ENCODE measurements at regions of chr15 and their contacts with region 1.

Region 1: GRCh38 chr15:80455668-80456442 is 51.7 kb downstream of the ARNT2 start:
- DNase-seq: peak; percentile 97
- ATAC-seq: peak; percentile 79
- H3K4me3 ChIP-seq: no peak overlapping the region
- H3K27ac ChIP-seq: peak overlapping the region; percentile 79; the same call in 1 of the 2 replicates
- H3K4me1 ChIP-seq: peaks cover 20% of the 10 kb centered on the region
- H3K27me3 ChIP-seq: no peaks in the 10 kb centered on the region
- CTCF ChIP-seq: peak; percentile 99
- POLR2A ChIP-seq: peak; percentile 46; the same call in 1 of the 2 replicates
- RAD21 ChIP-seq: peak; percentile 100

Region 2: DNA sequence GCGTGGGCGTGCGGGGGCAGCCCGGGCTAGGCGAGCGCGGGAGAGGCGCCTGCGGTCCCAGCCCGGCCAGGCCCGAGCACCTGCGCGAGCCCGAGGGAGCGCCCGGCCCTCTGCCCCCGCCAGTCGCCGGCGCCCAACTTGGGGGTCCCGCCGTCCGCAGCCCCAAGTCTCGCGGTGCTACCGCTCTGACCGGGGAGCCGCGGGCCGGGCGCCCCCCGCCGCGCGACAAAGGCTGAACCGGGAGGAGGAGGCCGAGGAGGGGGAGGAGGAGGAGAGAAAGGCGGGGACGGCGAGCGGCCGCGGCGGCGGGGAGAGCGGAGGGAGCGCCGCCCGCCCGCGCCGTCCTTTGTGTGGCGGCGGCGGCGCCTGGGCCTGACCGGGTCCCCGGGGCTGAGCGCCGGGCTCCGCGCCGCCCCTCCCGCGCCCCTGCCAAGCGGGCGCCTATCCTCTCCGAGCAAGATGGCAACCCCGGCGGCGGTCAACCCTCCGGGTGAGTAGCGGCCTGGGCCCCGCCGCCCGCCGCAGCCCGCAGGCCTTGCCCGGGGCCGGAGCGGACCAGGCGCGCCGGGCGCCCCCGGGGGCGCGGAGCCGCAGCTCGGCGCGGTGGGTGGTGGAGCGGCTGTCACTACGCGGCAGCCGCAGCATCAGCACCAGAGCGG is 51.7 kb before region 1 on chr15 and contains the start of gene ARNT2:
- CTCF ChIA-PET with region 1: no interaction called
- POLR2A ChIA-PET with region 1: no interaction called
- dilution Hi-C with region 1: no loop called
- in situ Hi-C with region 1: no loop called
- intact Hi-C with region 1: loop called (anchors 1 kb)
- DNase-seq: peak; percentile 25
- ATAC-seq: peak; percentile 84
- H3K4me3 ChIP-seq: peak within 1 kb of the TSS; percentile 53
- H3K27ac ChIP-seq: no peak within 1 kb of the TSS; the same call in 1 of the 2 replicates
- H3K4me1 ChIP-seq: peaks cover 3% of the 10 kb centered on the region; the same call in 1 of the 2 replicates
- H3K27me3 ChIP-seq: no peaks in the 10 kb centered on the region
- CTCF ChIP-seq: no peak
- POLR2A ChIP-seq: no peak
- RAD21 ChIP-seq: no peak
- total RNA-seq, gene ARNT2: 14.7 and 19.0 TPM in 2 replicates

Region 3: GRCh38 chr15:80507712-80508316 is 52.0 kb after region 1 on chr15:
- CTCF ChIA-PET with region 1: interaction called, 5 read pairs
- POLR2A ChIA-PET with region 1: no interaction called
- dilution Hi-C with region 1: no loop called
- in situ Hi-C with region 1: no loop called
- intact Hi-C with region 1: loop called (anchors 5 kb)
- DNase-seq: peak; percentile 96
- ATAC-seq: peak; percentile 82
- H3K4me3 ChIP-seq: no peak overlapping the region
- H3K27ac ChIP-seq: peak overlapping the region; percentile 99
- H3K4me1 ChIP-seq: peaks cover 24% of the 10 kb centered on the region
- H3K27me3 ChIP-seq: no peaks in the 10 kb centered on the region
- CTCF ChIP-seq: no peak
- POLR2A ChIP-seq: no peak
- RAD21 ChIP-seq: no peak

Region 4: GRCh38 chr15:80567721-80568157 is 111.9 kb after region 1 on chr15:
- CTCF ChIA-PET with region 1: interaction called, 25 read pairs
- POLR2A ChIA-PET with region 1: no interaction called
- dilution Hi-C with region 1: no loop called
- in situ Hi-C with region 1: loop called (anchors 5 kb)
- intact Hi-C with region 1: loop called (anchors 1 kb)
- DNase-seq: peak; percentile 89
- ATAC-seq: peak; percentile 95
- H3K4me3 ChIP-seq: no peak overlapping the region
- H3K27ac ChIP-seq: peak overlapping the region; percentile 49
- H3K4me1 ChIP-seq: peaks cover 16% of the 10 kb centered on the region
- H3K27me3 ChIP-seq: no peaks in the 10 kb centered on the region
- CTCF ChIP-seq: peak; percentile 97
- POLR2A ChIP-seq: peak; percentile 56
- RAD21 ChIP-seq: peak; percentile 97

Region 5: DNA sequence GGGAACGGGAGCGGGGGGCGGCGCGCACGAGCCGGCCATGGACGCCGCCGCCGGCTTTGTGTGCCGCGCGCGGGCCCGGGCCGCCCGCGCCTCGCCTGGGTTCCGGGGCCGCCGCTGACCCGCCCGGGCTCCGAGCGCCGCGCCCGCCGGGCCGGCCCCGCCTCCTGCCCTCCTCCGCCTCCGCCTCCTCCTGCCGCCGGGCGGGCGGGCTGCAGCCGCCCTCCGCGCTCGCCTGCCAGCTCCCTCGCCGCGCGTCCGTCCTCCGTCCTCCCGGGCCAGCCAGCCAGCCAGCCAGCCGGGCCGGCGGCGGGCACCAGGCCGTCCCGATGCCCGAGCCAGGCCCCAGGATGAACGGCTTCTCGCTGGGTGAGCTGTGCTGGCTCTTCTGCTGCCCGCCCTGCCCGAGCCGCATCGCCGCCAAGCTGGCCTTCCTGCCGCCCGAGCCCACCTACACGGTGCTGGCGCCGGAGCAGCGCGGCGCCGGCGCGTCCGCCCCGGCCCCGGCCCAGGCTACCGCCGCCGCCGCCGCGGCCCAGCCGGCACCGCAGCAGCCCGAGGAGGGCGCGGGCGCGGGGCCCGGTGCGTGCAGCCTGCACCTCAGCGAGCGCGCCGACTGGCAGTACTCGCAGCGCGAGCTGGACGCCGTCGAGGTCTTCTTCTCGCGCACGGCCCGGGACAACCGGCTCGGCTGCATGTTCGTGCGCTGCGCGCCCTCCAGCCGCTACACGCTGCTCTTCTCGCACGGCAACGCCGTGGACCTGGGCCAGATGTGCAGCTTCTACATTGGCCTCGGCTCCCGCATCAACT is 239.5 kb after region 1 on chr15 and contains the start of gene ABHD17C:
- CTCF ChIA-PET with region 1: no interaction called
- POLR2A ChIA-PET with region 1: no interaction called
- dilution Hi-C with region 1: no loop called
- in situ Hi-C with region 1: loop called (anchors 5 kb)
- intact Hi-C with region 1: loop called (anchors 2 kb)
- DNase-seq: peak; percentile 53
- ATAC-seq: peak; percentile 84
- H3K4me3 ChIP-seq: peak within 1 kb of the TSS; percentile 100
- H3K27ac ChIP-seq: peak within 1 kb of the TSS; percentile 92
- H3K4me1 ChIP-seq: peaks cover 14% of the 10 kb centered on the region
- H3K27me3 ChIP-seq: no peaks in the 10 kb centered on the region
- CTCF ChIP-seq: no peak
- POLR2A ChIP-seq: no peak
- RAD21 ChIP-seq: no peak; the same call in 1 of the 2 replicates
- total RNA-seq, gene ABHD17C: 5.3 and 5.4 TPM in 2 replicates